OCI-LY7 (cell line): ENCODE measurements at regions of chr6 and their contacts with region 1.

Region 1: GRCh38 chr6:13032566-13032965 is 295.8 kb downstream of the TBC1D7 start:
- DNase-seq: no peak
- H3K4me3 ChIP-seq: no peak overlapping the region
- H3K27ac ChIP-seq: no peak overlapping the region
- H3K4me1 ChIP-seq: no peaks in the 10 kb centered on the region
- CTCF ChIP-seq: no peak

Region 2: GRCh38 chr6:13044373-13045239 is 12.0 kb after region 1 on chr6:
- CTCF ChIA-PET with region 1: interaction called, 14 read pairs
- POLR2A ChIA-PET with region 1: no interaction called
- intact Hi-C with region 1: no loop called
- DNase-seq: peak; percentile 5
- H3K4me3 ChIP-seq: no peak overlapping the region
- H3K27ac ChIP-seq: no peak overlapping the region
- H3K4me1 ChIP-seq: no peaks in the 10 kb centered on the region
- CTCF ChIP-seq: no peak